ENCODE measurements at regions of chr3 and their contacts with region 1.

Region 1: DNA sequence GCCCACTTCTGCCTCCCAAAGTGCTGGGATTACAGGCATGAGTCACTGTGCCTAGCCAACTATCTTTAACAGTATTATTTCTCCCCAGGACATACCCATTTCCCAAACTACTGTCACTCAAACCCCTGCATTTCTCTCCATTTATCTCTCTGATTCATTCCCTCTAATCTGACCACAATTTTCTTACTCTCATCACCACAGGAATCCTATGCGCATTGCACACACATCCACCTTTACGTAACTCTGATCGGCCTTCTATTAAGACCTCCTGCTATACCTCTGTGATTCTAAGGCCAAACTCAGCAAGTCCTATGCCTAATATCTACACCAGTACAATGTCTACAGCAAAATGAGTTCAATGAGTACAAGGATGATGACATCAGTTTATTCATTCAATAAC is 235.0 kb downstream of the ULK4 start:
- DNase-seq: no peak
- H3K4me3 ChIP-seq: no peak overlapping the region
- H3K27ac ChIP-seq: no peak overlapping the region
- H3K4me1 ChIP-seq: no peaks in the 10 kb centered on the region
- H3K27me3 ChIP-seq: no peaks in the 10 kb centered on the region
- CTCF ChIP-seq: no peak
- EP300 ChIP-seq: no peak
- POLR2A ChIP-seq: no peak

Region 2: GRCh38 chr3:42314411-42314810 is 587.5 kb after region 1 on chr3:
- in situ Hi-C with region 1: no loop called
- intact Hi-C with region 1: loop called (anchors 10 kb)
- DNase-seq: no peak
- H3K4me3 ChIP-seq: no peak overlapping the region
- H3K27ac ChIP-seq: no peak overlapping the region
- H3K4me1 ChIP-seq: no peaks in the 10 kb centered on the region
- H3K27me3 ChIP-seq: no peaks in the 10 kb centered on the region
- CTCF ChIP-seq: no peak
- EP300 ChIP-seq: no peak
- POLR2A ChIP-seq: no peak

Measured in transverse colon (tissue), 4 donors.